Activated T-helper 1 cell treated with anti-CD3 and anti-CD28 coated beads, Interleukin-12 subunit alpha, Interleukin-12 subunit beta, Interleukin-2, Interleukin-4 antibody, amounts not matched to agents 30 ng/mL and 10 ng/mL and 1 ng/mL, durations not matched to agents 14 hours and 24 hours and 36 hours (primary cell): ENCODE measurements at regions of chr9 and their contacts with region 1.

Region 1: GRCh38 chr9:32550562-32551433 is 1.3 kb upstream of the SMIM27 start:
- DNase-seq: peak; percentile 91
- H3K4me3 Mint-ChIP-seq: peak overlapping the region; percentile 93
- H3K27ac Mint-ChIP-seq: peak overlapping the region; percentile 99
- H3K4me1 Mint-ChIP-seq: peaks cover 38% of the 10 kb centered on the region
- H3K27me3 Mint-ChIP-seq: no peaks in the 10 kb centered on the region

Region 2: GRCh38 chr9:32378993-32379729 is 171.6 kb before region 1 on chr9:
- intact Hi-C with region 1: loop called (anchors 1 kb)
- DNase-seq: peak; percentile 42
- H3K4me3 Mint-ChIP-seq: peak overlapping the region; percentile 16
- H3K27ac Mint-ChIP-seq: no peak overlapping the region
- H3K4me1 Mint-ChIP-seq: peaks cover 7% of the 10 kb centered on the region
- H3K27me3 Mint-ChIP-seq: peaks cover 21% of the 10 kb centered on the region

Region 3: DNA sequence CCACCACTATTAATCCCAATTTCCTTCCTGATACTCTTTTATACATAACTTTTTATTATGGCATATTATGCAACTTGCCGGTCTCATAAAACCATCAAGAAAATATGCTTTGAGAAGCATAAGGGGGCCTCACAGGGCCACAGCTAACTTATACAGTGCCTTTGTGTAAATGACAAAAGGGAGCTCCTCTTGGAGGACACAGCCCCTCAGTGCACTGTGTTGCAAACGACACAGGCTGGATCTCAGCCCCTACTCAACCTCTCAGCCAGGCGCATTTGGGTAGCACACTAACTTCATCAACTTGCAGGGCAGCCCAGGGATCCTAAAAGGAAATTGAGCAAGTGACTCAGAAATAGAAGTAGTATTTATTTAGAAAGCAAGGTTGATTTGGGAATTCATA is 60.2 kb before region 1 on chr9:
- intact Hi-C with region 1: loop called (anchors 5 kb)
- DNase-seq: no peak
- H3K4me3 Mint-ChIP-seq: no peak overlapping the region
- H3K27ac Mint-ChIP-seq: no peak overlapping the region
- H3K4me1 Mint-ChIP-seq: no peaks in the 10 kb centered on the region
- H3K27me3 Mint-ChIP-seq: no peaks in the 10 kb centered on the region

Region 4: DNA sequence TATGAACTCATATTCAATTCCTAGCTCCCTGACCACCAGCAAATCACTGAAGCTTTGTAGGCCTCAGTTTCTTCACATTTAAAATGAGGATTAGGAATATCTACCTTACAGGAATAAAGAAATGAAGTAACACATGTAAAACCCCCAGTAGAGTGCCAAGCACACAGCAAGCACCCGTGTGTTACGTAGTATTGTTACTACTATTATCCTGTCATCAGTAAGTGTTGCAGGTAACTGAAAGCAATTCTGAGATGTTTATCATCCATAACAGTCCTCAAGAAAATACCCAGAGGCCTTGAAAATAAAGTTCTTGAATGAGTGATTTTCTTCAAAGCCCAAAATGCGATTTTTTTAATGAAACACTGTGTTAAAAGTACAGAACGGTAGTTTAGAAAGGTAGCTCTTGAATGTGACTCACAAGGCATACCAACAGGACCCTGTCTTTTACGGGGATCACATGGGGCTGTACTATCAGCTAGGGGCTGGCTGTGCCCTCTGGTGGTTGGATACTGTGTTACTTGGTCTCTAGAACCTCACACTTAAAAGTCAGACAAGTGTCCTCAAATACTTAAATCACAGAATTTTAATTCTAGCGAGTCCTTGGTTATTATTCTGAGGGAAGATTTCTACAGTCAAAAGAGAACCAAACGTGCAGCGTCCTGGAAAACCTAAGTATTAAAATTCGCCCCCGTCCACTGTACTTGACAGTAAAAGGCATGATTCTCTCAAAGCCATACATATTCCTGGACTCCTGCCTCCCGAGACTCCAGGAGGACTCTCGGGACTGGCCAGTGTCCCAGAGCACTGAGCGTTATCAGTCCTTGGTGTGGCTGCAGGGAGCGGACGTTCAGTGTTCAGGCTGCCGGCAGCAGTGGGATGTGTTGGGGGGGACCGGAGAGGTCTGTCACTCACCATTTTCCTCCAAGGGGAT is 21.4 kb after region 1 on chr9:
- intact Hi-C with region 1: loop called (anchors 1 kb)
- DNase-seq: peak; percentile 65
- H3K4me3 Mint-ChIP-seq: peak overlapping the region; percentile 99
- H3K27ac Mint-ChIP-seq: peak overlapping the region; percentile 98
- H3K4me1 Mint-ChIP-seq: peaks cover 21% of the 10 kb centered on the region
- H3K27me3 Mint-ChIP-seq: peaks cover 11% of the 10 kb centered on the region

Region 5: GRCh38 chr9:32738501-32739172 is 187.8 kb after region 1 on chr9:
- intact Hi-C with region 1: no loop called
- DNase-seq: no peak
- H3K4me3 Mint-ChIP-seq: no peak overlapping the region
- H3K27ac Mint-ChIP-seq: no peak overlapping the region
- H3K4me1 Mint-ChIP-seq: no peaks in the 10 kb centered on the region
- H3K27me3 Mint-ChIP-seq: no peaks in the 10 kb centered on the region

Region 6: DNA sequence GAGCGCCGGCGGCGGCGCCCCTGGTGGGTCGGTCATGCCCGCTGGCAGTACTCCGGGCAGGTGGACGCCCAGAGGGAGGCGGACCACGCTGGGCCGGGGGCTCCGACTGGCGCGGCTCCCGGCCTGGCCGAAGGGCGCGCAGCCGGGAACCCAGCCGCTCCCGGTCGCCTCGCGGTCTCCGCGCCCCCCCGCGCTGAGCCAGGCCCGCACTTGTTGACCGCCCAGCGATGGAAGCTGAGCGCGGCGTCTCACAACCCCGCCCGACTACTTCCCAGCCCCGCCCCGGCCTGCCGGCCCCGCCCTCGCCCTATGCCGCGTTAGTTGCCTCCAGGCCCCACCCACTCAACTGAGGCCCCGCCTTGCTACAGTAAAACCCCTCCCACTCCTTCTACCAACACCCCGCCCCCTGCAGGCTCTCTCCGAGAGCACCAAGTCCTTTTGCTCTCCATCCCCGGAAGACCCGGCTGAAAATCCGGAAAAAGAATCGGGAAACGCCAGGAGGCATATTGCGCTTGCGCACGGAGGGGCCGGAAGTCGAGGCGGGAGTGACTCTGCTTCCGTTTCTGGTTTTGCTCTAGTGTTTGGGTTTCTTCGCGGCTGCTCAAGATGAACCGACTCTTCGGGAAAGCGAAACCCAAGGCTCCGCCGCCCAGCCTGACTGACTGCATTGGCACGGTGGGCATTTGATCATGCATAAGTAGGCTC is 713.8 kb after region 1 on chr9 and contains the starts of genes BAG1 and CHMP5:
- intact Hi-C with region 1: loop called (anchors 5 kb)
- DNase-seq: peak; percentile 99
- H3K4me3 Mint-ChIP-seq: peak within 1 kb of the TSS; percentile 96
- H3K27ac Mint-ChIP-seq: peak within 1 kb of the TSS; percentile 94
- H3K4me1 Mint-ChIP-seq: peaks cover 58% of the 10 kb centered on the region
- H3K27me3 Mint-ChIP-seq: no peaks in the 10 kb centered on the region
- total RNA-seq, gene BAG1: 75.0 and 78.2 TPM in 2 replicates
- total RNA-seq, gene CHMP5: 70.7 and 76.7 TPM in 2 replicates